GM12878 (cell line): ENCODE measurements at regions of chr19 and their contacts with region 1.

Region 1: GRCh38 chr19:49097455-49098288 is 12.4 kb downstream of the SNRNP70 start:
- DNase-seq: no peak
- ATAC-seq: peak; percentile 90
- H3K4me3 ChIP-seq: no peak overlapping the region
- H3K27ac ChIP-seq: no peak overlapping the region
- H3K4me1 ChIP-seq: no peaks in the 10 kb centered on the region
- H3K27me3 ChIP-seq: no peaks in the 10 kb centered on the region
- CTCF ChIP-seq: peak; percentile 96 to 98 (median 98); a peak in 5 of 6 replicates
- EP300 ChIP-seq: no peak
- POLR2A ChIP-seq: no peak
- RAD21 ChIP-seq: peak; percentile 85

Region 2: GRCh38 chr19:48993175-48994034 is 104.3 kb before region 1 on chr19 and contains the starts of genes GYS1 and RUVBL2:
- CTCF ChIA-PET with region 1: interaction called, 10 read pairs
- POLR2A ChIA-PET with region 1: no interaction called
- RAD21 ChIA-PET with region 1: interaction called, 3 read pairs
- SMC1A ChIA-PET with region 1: no interaction called
- in situ Hi-C with region 1: no loop called
- intact Hi-C with region 1: no loop called
- DNase-seq: peak; percentile 98
- ATAC-seq: peak; percentile 96
- H3K4me3 ChIP-seq: peak within 1 kb of the TSS; percentile 93
- H3K27ac ChIP-seq: peak within 1 kb of the TSS; percentile 86
- H3K4me1 ChIP-seq: peaks cover 3% of the 10 kb centered on the region
- H3K27me3 ChIP-seq: no peaks in the 10 kb centered on the region
- CTCF ChIP-seq: peak; percentile 98; a peak in 5 of 6 replicates
- EP300 ChIP-seq: no peak
- POLR2A ChIP-seq: peak; percentile 90
- RAD21 ChIP-seq: 0 out of 2 replicates have a peak, but pooled peaks have one; percentile 32
- polyA plus RNA-seq, gene GYS1: 3.7 to 5.8 TPM
- polyA plus RNA-seq, gene RUVBL2: 33.8 to 70.6 TPM

Region 3: GRCh38 chr19:49085020-49085867 is 12.4 kb before region 1 on chr19 and contains the start of gene SNRNP70:
- CTCF ChIA-PET with region 1: interaction called, 35 read pairs
- POLR2A ChIA-PET with region 1: no interaction called
- RAD21 ChIA-PET with region 1: interaction called, 5 read pairs
- SMC1A ChIA-PET with region 1: no interaction called
- in situ Hi-C with region 1: no loop called
- intact Hi-C with region 1: no loop called
- DNase-seq: peak; percentile 94
- ATAC-seq: peak; percentile 97
- H3K4me3 ChIP-seq: peak within 1 kb of the TSS; percentile 89
- H3K27ac ChIP-seq: peak within 1 kb of the TSS; percentile 87
- H3K4me1 ChIP-seq: peaks cover 4% of the 10 kb centered on the region; the same call in 1 of the 2 replicates
- H3K27me3 ChIP-seq: no peaks in the 10 kb centered on the region
- CTCF ChIP-seq: no peak
- EP300 ChIP-seq: no peak
- POLR2A ChIP-seq: peak; percentile 100
- RAD21 ChIP-seq: no peak
- polyA plus RNA-seq, gene SNRNP70: 2.7 to 14.9 TPM

Region 4: GRCh38 chr19:49148784-49149651 is 51.3 kb after region 1 on chr19:
- CTCF ChIA-PET with region 1: interaction called, 54 read pairs
- POLR2A ChIA-PET with region 1: no interaction called
- RAD21 ChIA-PET with region 1: interaction called, 13 read pairs
- SMC1A ChIA-PET with region 1: interaction called, 5 read pairs
- in situ Hi-C with region 1: no loop called
- intact Hi-C with region 1: loop called (anchors 1 kb)
- DNase-seq: no peak
- ATAC-seq: peak; percentile 71
- H3K4me3 ChIP-seq: no peak overlapping the region
- H3K27ac ChIP-seq: no peak overlapping the region
- H3K4me1 ChIP-seq: peaks cover 10% of the 10 kb centered on the region
- H3K27me3 ChIP-seq: peaks cover 6 to 22% of the 10 kb centered on the region in 2 experiments
- CTCF ChIP-seq: no peak
- EP300 ChIP-seq: no peak
- POLR2A ChIP-seq: no peak
- RAD21 ChIP-seq: no peak

Region 5: DNA sequence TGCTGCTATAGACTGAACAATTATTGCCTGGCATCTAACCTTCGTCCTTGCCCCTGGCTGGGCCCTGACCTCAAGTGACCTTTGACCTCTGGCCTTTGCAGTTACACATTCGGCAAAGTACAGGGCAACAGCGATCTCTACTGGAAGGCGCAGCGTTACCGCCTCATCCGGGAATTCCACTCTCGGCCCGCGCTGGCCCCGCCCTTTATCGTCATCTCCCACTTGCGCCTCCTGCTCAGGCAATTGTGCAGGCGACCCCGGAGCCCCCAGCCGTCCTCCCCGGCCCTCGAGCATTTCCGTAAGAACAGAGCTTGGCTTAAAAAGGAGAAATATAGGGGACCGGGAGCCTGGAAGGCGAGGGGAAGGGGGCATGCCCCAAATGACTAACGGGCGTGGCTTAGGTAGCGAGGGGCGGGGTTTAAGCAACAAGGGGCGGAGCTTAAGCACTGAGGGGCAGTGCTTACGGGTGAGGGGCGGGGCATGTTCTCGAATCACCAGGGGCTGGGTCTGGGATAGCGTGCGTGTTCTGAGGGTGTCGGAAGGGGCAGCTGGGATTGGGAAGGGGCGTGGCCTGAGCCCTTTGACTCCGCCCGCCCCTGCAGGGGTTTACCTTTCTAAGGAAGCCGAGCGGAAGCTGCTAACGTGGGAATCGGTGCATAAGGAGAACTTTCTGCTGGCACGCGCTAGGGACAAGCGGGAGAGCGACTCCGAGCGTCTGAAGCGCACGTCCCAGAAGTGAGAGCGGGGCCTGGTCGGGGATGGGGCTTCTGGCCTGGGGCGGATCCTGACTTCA is 112.6 kb after region 1 on chr19:
- CTCF ChIA-PET with region 1: interaction called, 40 read pairs
- POLR2A ChIA-PET with region 1: no interaction called
- RAD21 ChIA-PET with region 1: interaction called, 11 read pairs
- SMC1A ChIA-PET with region 1: interaction called, 8 read pairs
- in situ Hi-C with region 1: loop called (anchors 5 kb)
- intact Hi-C with region 1: loop called (anchors 2 kb)
- DNase-seq: no peak
- ATAC-seq: peak; percentile 48; the same call in 2 of the 3 replicates
- H3K4me3 ChIP-seq: no peak overlapping the region
- H3K27ac ChIP-seq: no peak overlapping the region
- H3K4me1 ChIP-seq: peaks cover 7% of the 10 kb centered on the region
- H3K27me3 ChIP-seq: peaks cover 0 to 2% of the 10 kb centered on the region in 2 experiments; a peak in 1 of 4 replicates
- CTCF ChIP-seq: no peak
- EP300 ChIP-seq: no peak
- POLR2A ChIP-seq: no peak
- RAD21 ChIP-seq: no peak